ENCODE measurements at regions of chr10 and their contacts with region 1.

Region 1: DNA sequence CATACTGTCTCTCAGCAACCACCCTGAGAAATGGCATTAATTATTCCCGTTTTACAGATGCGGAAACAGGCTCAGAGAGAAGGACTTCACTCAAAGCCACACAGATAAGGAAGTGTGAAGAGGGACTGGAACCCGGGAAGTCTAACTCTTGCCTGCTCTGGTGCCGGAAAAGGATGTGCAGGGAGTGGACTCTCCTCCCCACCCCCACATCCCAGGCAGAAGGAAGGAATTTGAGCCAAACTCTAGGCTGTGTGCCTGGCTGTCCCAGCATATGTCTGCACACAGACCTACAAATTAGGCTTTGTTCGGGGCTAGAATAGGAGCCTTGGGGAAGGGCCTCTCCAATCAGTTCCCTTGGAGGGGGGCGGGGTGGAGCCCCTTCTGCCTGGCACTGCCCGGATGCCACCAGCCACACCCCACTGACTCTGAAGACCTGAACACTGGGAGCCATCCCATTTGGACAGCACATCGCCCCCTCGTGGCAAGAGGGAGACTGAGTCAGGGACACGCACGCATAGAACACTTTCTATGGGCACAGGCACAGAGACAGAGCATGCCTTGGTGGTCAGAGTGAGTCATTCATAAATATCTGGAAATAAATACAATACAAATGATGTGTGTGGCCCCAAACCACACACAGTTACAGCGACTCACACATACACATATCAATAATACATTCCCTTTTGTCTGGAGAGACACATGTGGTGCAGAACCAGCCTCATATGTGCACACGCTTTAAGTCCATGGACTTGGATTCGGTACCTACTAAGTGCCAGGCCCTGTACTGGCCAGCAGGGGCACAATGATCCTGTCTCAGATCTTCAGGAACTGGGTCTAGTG is 13.1 kb downstream of the LZTS2 start:
- DNase-seq: peak; percentile 85 to 91 (median 89)
- H3K4me3 ChIP-seq: no peak overlapping the region
- H3K27ac ChIP-seq: no peak overlapping the region
- H3K4me1 ChIP-seq: peaks cover 11% of the 10 kb centered on the region
- H3K27me3 ChIP-seq: no peaks in the 10 kb centered on the region
- CTCF ChIP-seq: peak; percentile 91 to 92 (median 92)
- EP300 ChIP-seq: no peak
- POLR2A ChIP-seq: no peak

Region 2: GRCh38 chr10:100993986-100994708 is 18.6 kb before region 1 on chr10:
- intact Hi-C with region 1: loop called (anchors 2 kb)
- DNase-seq: peak in 1 of 5 donors; percentile 37
- H3K4me3 ChIP-seq: no peak overlapping the region
- H3K27ac ChIP-seq: no peak overlapping the region
- H3K4me1 ChIP-seq: peaks cover 10% of the 10 kb centered on the region
- H3K27me3 ChIP-seq: no peaks in the 10 kb centered on the region
- CTCF ChIP-seq: peak; percentile 33 to 75 (median 54)
- EP300 ChIP-seq: no peak
- POLR2A ChIP-seq: no peak

Measured in ovary (tissue), 10 donors.